ENCODE measurements at regions of chr14 and their contacts with region 1.

Region 1: GRCh38 chr14:81170104-81170828 is 50.5 kb downstream of the GTF2A1 start:
- DNase-seq: peak; percentile 95 to 96
- H3K4me3 ChIP-seq: peak overlapping the region; percentile 61
- H3K27ac ChIP-seq: peak overlapping the region; percentile 86
- H3K4me1 ChIP-seq: peaks cover 0 to 13% (median 3%) of the 10 kb centered on the region in 4 donors
- H3K27me3 ChIP-seq: no peaks in the 10 kb centered on the region
- CTCF ChIP-seq: peak; percentile 80 to 87

Region 2: DNA sequence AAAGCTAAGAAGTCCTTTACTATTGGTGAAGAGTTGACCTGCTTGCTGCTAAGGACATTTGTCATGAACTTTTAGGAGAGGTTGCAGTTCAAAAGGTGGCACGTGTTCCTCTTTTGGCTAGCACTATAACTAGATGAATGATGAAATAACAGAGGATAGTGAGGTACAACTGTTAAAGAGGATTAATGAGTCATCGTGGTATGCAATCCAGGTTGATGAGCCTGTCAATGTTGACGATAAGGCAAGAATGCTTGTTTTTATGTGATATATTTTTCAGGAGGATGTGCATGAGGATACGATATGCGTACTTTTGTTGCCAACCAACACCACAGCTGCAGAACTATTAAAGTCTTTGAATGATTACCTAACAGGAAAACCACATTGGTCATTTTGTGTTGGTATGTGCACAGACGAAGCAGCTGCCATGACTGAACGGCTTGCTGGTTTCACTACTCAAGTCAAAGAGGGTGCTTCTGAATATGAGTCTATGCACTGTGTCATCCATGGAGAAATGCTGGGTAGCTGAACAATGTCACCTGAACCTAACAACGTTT is 239.4 kb before region 1 on chr14:
- intact Hi-C with region 1: no loop called
- DNase-seq: no peak
- H3K4me3 ChIP-seq: no peak overlapping the region
- H3K27ac ChIP-seq: no peak overlapping the region
- H3K4me1 ChIP-seq: no peaks in the 10 kb centered on the region
- H3K27me3 ChIP-seq: no peaks in the 10 kb centered on the region
- CTCF ChIP-seq: no peak

Region 3: DNA sequence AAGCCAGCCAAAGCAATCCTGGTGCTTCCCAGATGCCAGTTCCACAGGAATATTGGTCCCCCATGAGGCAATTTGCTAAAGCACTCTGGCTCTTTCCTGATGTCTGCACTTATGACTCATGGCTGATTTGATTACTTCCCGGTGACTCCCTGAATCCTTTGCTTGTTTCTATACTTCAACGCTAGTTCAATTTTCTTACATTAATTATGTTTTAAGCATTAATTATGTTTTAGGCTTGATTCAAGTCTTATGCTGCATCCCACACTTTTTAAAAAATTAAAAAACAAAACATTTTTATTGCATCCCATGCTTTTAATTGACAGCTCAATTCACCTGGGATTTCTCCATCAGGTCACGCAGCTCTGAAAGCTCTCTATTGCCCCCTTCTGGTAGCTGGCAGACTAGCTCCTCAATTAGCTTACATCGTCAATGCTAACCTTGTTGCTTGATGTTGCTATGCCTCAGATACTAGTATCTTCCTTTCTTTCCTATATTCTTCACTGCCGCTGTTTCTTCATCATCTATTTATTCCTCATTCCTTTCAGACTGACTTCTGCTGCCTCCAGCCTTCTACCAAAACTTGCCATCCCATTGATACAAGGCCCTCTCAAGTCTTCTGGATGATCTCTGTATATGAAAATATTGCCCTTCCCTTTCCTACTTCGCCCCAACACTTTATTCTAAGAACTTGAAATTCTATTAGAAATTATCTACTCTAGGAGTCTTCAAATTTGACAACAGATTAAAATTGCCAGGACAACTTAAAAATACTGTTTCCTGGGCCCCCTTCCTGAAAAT is 182.8 kb before region 1 on chr14:
- intact Hi-C with region 1: loop called (anchors 5 kb)
- DNase-seq: peak; percentile 64 to 67
- H3K4me3 ChIP-seq: no peak overlapping the region
- H3K27ac ChIP-seq: no peak overlapping the region
- H3K4me1 ChIP-seq: peaks cover 0 to 3% (median 0%) of the 10 kb centered on the region in 4 donors
- H3K27me3 ChIP-seq: peaks cover 0 to 16% of the 10 kb centered on the region in 2 donors
- CTCF ChIP-seq: peak; percentile 90 to 92

Region 4: DNA sequence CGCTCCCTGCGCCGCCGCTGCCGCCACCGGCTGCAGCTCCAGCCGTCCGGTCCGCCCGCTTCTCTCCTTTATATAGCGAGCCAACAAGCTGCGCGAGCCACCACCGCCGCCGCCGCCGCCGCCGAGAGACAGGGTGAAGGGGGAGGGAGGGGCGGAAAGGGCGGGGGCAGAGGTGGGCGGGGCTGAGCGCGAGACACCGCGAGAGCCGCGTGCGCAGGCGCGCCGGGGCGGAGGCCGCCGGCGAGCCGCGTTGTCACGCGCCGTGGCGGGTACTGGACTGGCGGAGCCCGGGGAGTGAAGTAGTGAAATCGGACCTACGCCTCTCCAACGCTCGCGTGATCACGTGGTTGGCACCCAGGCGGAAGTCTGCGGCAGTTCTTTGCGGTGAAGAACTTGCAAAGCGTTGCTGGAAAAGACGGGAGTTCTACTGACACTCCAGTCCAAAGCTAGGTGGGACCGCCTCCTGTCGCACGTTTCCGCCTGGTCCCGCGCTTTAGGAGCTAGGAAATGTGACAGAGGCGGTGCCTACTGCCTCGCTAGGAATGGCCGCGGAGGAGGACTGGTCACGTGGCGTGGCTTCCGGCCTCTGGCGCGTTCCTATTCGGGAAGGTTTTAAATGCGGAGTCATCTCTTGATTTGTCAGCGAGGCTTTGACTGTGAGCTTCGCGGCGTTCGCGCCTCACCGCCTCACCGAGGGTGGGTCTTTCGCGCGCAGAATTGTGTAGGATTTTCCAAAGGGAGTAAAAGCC is 50.7 kb after region 1 on chr14 and contains the start of gene GTF2A1:
- intact Hi-C with region 1: loop called (anchors 5 kb)
- DNase-seq: peak; percentile 94 to 97
- H3K4me3 ChIP-seq: peak within 1 kb of the TSS; percentile 84 to 95
- H3K27ac ChIP-seq: peak within 1 kb of the TSS; percentile 92 to 99
- H3K4me1 ChIP-seq: peaks cover 0 to 36% (median 13%) of the 10 kb centered on the region in 4 donors
- H3K27me3 ChIP-seq: no peaks in the 10 kb centered on the region
- CTCF ChIP-seq: peak in 1 of 2 experiments; percentile 19

Region 5: DNA sequence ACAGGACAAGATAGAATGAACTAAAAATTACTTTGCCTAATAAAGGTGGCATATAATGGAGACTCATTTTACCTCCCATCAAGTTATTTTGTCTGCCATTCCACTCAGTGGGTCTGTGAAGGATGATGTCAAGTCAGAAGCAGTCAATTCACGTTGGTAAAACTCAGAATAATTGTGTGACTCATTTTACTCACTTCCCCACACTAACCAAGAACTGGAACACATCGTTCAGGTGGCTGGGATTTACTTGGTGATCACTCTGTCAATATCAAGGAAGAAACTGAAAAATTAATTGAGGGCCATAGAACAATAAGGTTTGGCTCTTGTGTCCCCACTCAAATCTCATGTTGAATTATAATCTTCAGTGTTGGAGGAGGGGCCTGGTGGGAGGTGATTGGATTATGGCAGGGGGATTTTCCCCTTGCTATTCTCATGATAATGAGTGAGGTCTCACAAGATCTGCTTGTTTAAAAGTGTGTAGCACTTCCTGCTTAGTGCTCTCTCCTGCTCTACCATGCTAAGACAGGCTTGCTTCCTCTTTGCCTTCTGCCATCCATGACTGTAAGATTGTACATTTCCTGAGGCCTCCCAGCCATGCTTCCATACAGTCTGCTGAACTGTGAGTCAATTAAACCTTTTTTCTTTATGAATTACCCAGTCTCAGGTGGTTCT is 86.2 kb after region 1 on chr14:
- intact Hi-C with region 1: no loop called
- DNase-seq: no peak
- H3K4me3 ChIP-seq: no peak overlapping the region
- H3K27ac ChIP-seq: no peak overlapping the region
- H3K4me1 ChIP-seq: no peaks in the 10 kb centered on the region
- H3K27me3 ChIP-seq: no peaks in the 10 kb centered on the region
- CTCF ChIP-seq: no peak

Region 6: DNA sequence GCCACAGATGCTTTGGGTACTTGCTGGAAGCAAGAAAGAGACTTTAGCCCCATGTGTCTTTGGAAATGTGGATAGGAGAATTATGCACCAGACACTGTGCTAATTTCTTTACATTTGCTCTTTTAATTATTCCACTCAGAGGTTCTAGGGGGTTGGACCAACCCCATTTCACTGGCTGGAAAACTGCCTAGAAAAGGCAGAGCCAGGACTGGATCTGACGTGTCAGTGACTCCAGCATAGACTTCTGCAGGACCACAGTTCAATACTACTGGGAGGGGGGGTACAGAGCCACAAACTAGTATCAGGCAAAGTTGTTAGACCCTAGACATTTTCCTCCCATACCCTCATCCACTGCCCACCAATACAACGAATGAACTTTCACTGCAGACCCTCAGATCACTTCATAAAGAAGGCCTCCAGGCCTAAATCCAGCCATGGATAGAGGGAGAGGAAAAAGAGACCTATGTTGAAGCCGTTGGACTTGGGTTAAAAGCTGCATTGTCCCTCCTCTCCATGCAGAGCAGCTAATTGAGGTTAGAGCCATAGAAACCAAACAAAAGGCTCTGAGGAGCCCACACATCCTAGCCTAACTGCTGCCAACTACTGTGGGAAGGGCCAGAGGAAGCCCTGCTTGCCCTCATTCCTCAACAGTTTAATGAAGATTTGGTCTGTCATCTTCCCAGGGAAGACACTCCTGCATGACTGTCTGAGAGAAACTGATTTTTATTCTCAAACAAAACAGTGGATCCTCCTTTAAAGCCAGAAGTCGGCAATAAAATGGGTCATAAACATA is 161.2 kb after region 1 on chr14:
- intact Hi-C with region 1: no loop called
- DNase-seq: no peak
- H3K4me3 ChIP-seq: no peak overlapping the region
- H3K27ac ChIP-seq: no peak overlapping the region
- H3K4me1 ChIP-seq: no peaks in the 10 kb centered on the region
- H3K27me3 ChIP-seq: no peaks in the 10 kb centered on the region
- CTCF ChIP-seq: no peak

Measured in tibial artery (tissue), 4 donors.